Aorta (tissue), 5 donors: ENCODE measurements at regions of chr19 and their contacts with region 1.

Region 1: DNA sequence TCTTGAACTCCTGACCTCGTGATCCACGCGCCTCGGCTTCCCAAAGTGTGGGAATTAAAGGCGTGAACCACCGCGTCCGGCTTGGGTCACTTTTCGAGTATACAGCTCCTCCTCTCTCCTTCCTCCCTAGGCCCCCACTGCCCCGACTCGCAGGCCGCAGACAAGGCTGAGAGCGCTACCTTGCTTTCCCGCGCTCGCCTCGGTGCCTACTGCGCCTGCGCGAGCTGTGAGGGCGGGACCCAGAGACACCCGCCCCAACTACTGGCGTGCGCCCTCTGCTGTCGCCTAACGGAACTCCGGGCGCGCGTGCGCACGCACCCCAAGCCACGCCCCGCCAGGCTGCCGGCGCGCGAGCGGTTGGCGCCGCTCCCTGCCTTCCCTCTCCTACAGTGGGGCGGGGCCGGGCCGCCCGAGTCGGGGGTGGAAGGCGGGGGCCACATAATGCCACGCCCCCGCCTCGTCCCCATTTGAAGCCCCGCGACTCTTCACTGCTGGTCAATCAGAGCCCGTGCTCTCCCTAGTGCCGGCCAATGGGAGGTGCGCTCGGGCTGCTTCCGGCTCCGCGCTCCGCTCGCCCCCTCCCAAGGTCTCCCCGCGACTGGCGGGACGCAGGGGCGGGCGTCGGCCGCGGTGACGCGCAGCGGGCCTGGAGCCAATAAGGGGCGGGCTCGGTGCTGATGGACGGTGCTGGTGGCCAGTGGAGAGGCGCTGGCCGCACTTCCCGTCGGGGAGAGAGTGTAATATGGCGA is at the start of gene RAB8A:
- DNase-seq: peak; percentile 99 to 100
- ATAC-seq: peak; percentile 98
- H3K4me3 ChIP-seq: peak within 1 kb of the TSS; percentile 48 to 94
- H3K27ac ChIP-seq: peak within 1 kb of the TSS in 1 of 2 donors; percentile 35
- H3K4me1 ChIP-seq: peaks cover 0 to 1% of the 10 kb centered on the region in 2 donors
- H3K27me3 ChIP-seq: no peaks in the 10 kb centered on the region
- total RNA-seq, gene RAB8A: 51.3 to 56.7 TPM

Region 2: DNA sequence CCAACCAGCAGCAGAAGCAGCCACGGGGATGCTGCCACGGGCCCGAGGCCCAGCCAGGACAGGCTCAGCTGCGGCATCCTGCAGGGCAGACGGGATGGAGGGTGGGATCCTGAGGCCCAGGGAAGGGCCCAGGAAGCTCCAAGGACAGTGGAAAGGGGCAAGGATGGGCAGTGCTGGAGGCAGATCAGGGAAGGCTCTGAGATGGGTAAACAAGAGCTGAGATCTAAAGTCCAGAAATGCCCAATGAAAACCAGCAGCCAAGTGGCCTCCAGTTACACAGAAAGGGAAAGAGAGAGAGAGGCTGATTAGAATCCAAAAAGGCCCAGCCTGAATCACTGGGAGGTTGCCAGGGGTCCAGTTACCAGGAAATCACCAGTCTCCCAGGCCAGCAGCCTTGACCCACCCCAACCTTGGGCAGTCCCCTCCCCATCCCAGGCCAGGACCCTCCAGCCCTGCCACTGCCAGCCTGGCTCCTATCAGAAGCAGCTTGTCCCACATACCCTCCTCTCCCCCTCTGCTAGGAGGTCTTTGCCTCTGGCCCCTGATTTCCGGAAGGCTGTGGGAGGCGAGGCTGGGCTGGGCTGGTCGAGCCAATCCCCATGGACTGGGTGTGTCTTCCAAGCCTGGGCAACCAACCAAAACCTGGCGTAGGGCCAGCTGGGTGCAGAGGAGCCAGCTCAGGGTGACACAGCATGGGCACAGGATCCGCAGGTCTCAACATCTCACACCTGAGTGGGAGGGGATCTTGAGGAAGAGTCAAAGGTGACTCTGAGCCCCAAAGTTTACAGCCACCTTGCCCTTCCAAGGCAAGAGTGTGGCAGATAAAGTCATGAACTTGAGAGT is 176.8 kb before region 1 on chr19 and contains the start of gene CYP4F11:
- intact Hi-C with region 1: loop called in 1 of 2 experiments (anchors 5 kb)
- DNase-seq: peak; percentile 86 to 94
- ATAC-seq: no peak
- H3K4me3 ChIP-seq: no peak within 1 kb of the TSS
- H3K27ac ChIP-seq: peak within 1 kb of the TSS in 1 of 2 donors; percentile 79
- H3K4me1 ChIP-seq: no peaks in the 10 kb centered on the region
- H3K27me3 ChIP-seq: no peaks in the 10 kb centered on the region
- total RNA-seq, gene CYP4F11: 3.9 to 11.0 TPM

Region 3: GRCh38 chr19:16041299-16041990 is 69.9 kb before region 1 on chr19:
- intact Hi-C with region 1: loop called (anchors 1 to 5 kb)
- DNase-seq: peak; percentile 88 to 97
- ATAC-seq: peak; percentile 93
- H3K4me3 ChIP-seq: no peak overlapping the region
- H3K27ac ChIP-seq: peak overlapping the region in 1 of 2 donors; percentile 14
- H3K4me1 ChIP-seq: no peaks in the 10 kb centered on the region
- H3K27me3 ChIP-seq: no peaks in the 10 kb centered on the region

Region 4: GRCh38 chr19:16066611-16067104 is 44.7 kb before region 1 on chr19:
- intact Hi-C with region 1: loop called (anchors 5 kb)
- DNase-seq: peak in 1 of 2 donors; percentile 49
- ATAC-seq: no peak
- H3K4me3 ChIP-seq: no peak overlapping the region
- H3K27ac ChIP-seq: peak overlapping the region; percentile 68 to 90
- H3K4me1 ChIP-seq: no peaks in the 10 kb centered on the region
- H3K27me3 ChIP-seq: no peaks in the 10 kb centered on the region